Uterus (tissue), 4 donors: ENCODE measurements at regions of chr17 and their contacts with region 1.

Region 1: GRCh38 chr17:42112552-42113176 is at the start of gene DHX58:
- DNase-seq: peak; percentile 77 to 82
- H3K4me3 ChIP-seq: peak within 1 kb of the TSS; percentile 42 to 50
- H3K27ac ChIP-seq: peak within 1 kb of the TSS; percentile 93 to 94
- H3K4me1 ChIP-seq: peaks cover 7 to 14% of the 10 kb centered on the region in 2 donors
- H3K27me3 ChIP-seq: no peaks in the 10 kb centered on the region
- CTCF ChIP-seq: peak in 1 of 4 experiments; percentile 28
- POLR2A ChIP-seq: peak; percentile 30 to 70
- total RNA-seq, gene DHX58: 12.9 to 21.3 (median 16.2) TPM

Region 2: DNA sequence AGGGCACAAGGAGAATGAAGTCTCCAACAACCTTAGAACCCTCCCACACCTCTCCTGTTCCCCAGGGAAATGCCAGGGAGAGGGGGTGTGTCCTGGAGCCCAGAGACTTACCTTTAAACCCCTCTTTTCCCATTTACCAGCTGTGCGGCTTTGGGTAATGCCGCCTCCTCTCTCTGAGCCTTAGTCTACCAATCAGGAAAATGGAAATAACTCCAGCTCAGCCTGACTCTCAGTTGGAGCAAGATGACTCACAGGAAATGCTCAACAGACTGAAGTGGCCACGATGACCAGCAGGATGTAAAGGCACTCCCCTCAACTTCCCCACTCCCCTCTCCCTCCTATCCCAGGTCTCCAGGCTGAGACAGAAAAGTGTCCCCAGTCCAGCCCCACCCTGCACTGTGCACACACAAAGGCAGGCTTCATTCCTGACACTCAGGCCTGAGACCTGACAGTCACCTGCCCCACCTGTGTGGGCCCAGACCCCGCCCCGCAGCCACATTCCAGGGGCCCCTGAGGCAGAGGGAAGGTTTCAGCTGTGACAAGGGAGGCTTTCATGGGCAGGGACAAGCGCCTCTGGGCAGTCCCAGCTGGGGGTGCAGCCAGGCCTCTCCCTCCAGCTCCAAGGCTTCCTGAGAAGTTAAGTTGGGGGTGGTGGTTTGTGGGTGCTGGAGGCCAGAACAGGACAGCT is 590.9 kb before region 1 on chr17:
- intact Hi-C with region 1: no loop called
- DNase-seq: no peak
- H3K4me3 ChIP-seq: no peak overlapping the region
- H3K27ac ChIP-seq: no peak overlapping the region
- H3K4me1 ChIP-seq: no peaks in the 10 kb centered on the region
- H3K27me3 ChIP-seq: no peaks in the 10 kb centered on the region
- CTCF ChIP-seq: no peak
- POLR2A ChIP-seq: no peak

Region 3: DNA sequence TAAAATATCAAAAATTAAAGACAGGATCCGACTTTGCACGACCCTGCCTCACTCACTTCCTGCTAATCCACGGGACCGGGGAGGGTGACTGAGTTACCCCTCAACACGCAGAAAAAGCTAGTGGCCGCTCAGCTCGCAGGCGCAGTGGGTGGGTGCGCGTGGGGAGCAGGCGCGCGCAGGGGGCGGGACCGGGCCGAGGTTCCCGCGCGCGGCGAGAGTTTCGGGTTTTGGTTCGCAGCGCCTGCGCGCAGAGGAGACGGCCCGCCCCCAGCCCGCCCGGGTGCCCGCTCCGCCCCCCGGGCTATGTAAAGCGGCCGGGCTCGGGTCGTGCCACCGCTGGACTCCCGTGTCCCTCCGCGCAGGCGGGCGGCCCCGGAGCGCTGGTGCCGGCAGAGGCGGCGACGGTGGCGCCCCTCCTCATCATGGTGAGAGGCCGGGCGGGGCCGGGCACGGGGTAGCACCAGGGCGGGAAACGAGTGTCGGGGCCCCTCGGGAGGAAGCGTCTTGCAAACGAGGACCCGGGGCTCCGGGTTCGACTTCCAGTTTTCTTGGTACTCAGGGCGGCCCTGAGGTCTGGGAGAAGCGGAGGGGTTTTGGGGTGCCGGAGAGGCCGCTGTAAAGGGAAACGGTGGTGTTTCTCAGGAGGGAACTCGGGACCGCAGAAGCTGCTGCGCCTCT is 146.1 kb before region 1 on chr17 and contains the start of gene CNP:
- intact Hi-C with region 1: loop called (anchors 10 kb)
- DNase-seq: peak; percentile 87 to 92
- H3K4me3 ChIP-seq: peak within 1 kb of the TSS; percentile 79 to 92
- H3K27ac ChIP-seq: peak within 1 kb of the TSS; percentile 85 to 91
- H3K4me1 ChIP-seq: peaks cover 0 to 9% of the 10 kb centered on the region in 2 donors
- H3K27me3 ChIP-seq: no peaks in the 10 kb centered on the region
- CTCF ChIP-seq: peak in 1 of 4 experiments; percentile 34
- POLR2A ChIP-seq: peak; percentile 73 to 86
- total RNA-seq, gene CNP: 10.2 to 74.7 (median 40.2) TPM

Region 4: GRCh38 chr17:42027961-42028790 is 84.5 kb before region 1 on chr17:
- intact Hi-C with region 1: loop called (anchors 5 kb)
- DNase-seq: no peak
- H3K4me3 ChIP-seq: no peak overlapping the region
- H3K27ac ChIP-seq: no peak overlapping the region
- H3K4me1 ChIP-seq: no peaks in the 10 kb centered on the region
- H3K27me3 ChIP-seq: no peaks in the 10 kb centered on the region
- CTCF ChIP-seq: no peak
- POLR2A ChIP-seq: no peak

Region 5: DNA sequence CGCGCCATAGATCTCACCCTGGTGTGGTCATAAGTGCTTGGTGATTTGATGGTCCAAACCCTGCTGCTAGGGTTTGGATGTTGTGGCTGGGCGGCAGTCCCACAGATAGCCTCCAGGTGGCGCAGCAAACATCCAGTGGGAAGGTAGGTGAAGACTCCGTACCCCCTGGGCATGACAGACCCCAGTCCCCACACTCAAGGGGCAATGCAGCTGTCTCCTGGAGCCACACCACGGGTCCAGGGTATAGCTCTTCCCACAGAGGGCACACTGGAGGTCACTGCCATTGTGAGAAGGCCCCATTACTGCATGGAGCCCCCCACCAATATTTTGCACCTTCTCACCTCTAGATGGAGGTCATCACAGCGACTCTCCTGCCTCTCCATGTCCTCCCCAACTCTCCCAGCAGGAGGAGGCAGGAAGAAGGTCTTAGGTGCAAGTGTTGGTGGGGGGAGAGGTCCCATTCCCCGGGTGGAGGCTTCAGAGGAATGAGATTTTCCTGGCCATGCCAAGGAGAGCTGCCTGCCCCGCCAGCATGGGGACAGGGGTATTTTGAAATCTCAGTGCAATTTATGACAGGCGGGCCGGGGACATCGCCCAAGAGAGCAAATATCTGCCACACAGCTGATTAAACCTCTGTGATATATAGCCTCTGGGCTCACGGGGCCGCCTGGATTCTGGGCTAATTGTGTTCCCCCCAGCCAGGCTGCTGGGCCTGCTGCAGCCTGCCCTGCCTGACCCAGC is 45.1 kb before region 1 on chr17:
- intact Hi-C with region 1: loop called (anchors 5 kb)
- DNase-seq: peak; percentile 62 to 75
- H3K4me3 ChIP-seq: no peak overlapping the region
- H3K27ac ChIP-seq: no peak overlapping the region
- H3K4me1 ChIP-seq: peaks cover 0 to 6% of the 10 kb centered on the region in 2 donors
- H3K27me3 ChIP-seq: no peaks in the 10 kb centered on the region
- CTCF ChIP-seq: peak; percentile 68 to 87 (median 75)
- POLR2A ChIP-seq: no peak

Region 6: GRCh38 chr17:42212382-42212781 is 99.7 kb after region 1 on chr17:
- intact Hi-C with region 1: no loop called
- DNase-seq: no peak
- H3K4me3 ChIP-seq: no peak overlapping the region
- H3K27ac ChIP-seq: peak overlapping the region in 1 of 2 donors; percentile 52
- H3K4me1 ChIP-seq: no peaks in the 10 kb centered on the region
- H3K27me3 ChIP-seq: no peaks in the 10 kb centered on the region
- CTCF ChIP-seq: no peak
- POLR2A ChIP-seq: no peak